Left colon (tissue), 2 donors: ENCODE measurements at regions of chr4 and their contacts with region 1.

Region 1: GRCh38 chr4:76305971-76306881 is at the start of gene STBD1:
- DNase-seq: peak; percentile 91
- ATAC-seq: peak; percentile 80
- total RNA-seq, gene STBD1: 12.9 to 40.9 TPM

Region 2: GRCh38 chr4:76198411-76199237 is 107.6 kb before region 1 on chr4:
- intact Hi-C with region 1: loop called in 1 of 2 experiments (anchors 10 kb)
- DNase-seq: peak; percentile 75 to 89
- ATAC-seq: peak; percentile 67